GM10248 (cell line): ENCODE measurements at regions of chr14 and their contacts with region 1.

Region 1: GRCh38 chr14:75293920-75294642 is 15.5 kb downstream of the FOS start:
- DNase-seq: peak; percentile 99
- CTCF ChIP-seq: no peak

Region 2: DNA sequence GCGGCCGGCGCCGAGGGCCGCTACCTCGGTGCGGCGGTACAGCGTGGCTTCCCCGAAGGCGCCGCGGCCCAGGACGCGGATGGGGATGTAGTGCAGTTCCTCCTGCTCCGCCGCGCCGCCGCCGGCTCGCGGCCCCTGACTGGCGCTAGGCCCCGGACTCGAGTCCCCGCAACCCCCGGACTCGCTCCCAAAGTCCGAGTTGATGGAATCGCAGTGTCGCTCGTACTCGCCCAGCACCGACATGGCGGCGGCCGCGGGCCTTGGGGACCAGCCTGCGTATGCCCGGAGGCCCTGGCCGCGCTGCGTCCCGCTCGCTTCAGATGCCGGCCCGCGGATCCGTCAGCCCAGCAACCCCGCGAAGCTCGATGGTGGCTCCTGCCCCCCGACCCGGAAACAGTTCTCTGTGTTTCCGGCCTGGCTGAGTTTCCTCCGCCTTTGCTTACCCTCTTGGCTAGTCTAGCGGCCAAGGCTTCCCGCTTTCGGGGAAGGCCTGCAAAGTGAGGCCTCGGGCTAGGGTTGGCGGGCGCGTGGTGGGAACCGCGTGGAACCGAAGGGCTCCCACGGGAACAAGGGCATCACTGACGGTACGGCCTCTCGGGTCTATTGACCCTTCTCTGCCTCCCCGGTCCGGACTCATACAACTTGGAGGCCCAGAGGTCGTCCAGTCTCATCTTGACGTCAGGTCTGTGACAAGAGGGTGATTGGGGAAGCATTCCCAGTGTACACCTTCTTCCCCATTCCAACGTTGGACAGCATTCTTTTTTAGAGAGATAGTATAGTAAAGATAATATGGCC is 167.2 kb before region 1 on chr14 and contains the start of gene NEK9:
- CTCF ChIA-PET with region 1: interaction called, 102 read pairs
- POLR2A ChIA-PET with region 1: interaction called, 5 read pairs
- DNase-seq: peak; percentile 94
- CTCF ChIP-seq: no peak

Region 3: GRCh38 chr14:75141967-75142366 is 152.1 kb before region 1 on chr14:
- CTCF ChIA-PET with region 1: interaction called, 111 read pairs
- POLR2A ChIA-PET with region 1: no interaction called
- DNase-seq: no peak
- CTCF ChIP-seq: peak; percentile 36

Region 4: DNA sequence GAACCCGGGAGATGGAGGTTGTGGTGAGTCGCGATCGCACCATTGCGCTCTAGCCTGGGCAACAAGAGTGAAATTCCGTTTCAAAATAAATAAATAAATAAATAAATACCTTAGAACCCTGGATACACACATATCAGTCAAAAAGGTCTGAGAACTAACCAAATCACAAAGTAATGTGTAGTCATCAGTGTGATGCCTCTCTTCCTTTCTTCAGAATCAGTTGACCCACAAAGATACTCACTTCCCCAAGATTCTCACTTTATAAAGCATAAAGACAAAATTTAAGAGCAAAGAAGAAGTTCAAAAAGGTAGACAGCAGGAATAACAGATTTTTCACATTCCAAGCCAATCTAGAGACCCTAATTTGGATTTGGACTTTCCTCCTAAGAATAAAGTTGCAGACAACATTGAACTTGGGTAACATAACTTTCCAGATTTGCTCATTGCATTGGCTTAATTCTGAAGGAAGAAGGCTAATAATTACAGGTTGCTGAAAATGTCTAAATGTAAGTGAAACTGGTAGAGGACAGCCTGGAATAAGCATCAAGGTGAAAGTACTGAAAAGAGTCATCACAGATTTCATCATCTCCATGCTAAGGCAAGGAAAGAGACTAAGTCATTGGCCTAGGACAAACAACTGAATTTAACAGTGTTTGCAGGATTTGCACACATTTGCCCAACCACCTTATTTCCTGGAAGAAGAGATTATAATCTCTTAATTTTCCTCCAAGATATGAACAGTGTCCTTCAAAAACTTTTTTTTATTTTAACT is 135.1 kb before region 1 on chr14:
- CTCF ChIA-PET with region 1: interaction called, 12 read pairs
- POLR2A ChIA-PET with region 1: no interaction called
- DNase-seq: no peak
- CTCF ChIP-seq: no peak

Region 5: GRCh38 chr14:75283162-75283881 is 10.8 kb before region 1 on chr14:
- CTCF ChIA-PET with region 1: interaction called, 42 read pairs
- POLR2A ChIA-PET with region 1: interaction called, 11 read pairs
- DNase-seq: no peak
- CTCF ChIP-seq: no peak

Region 6: DNA sequence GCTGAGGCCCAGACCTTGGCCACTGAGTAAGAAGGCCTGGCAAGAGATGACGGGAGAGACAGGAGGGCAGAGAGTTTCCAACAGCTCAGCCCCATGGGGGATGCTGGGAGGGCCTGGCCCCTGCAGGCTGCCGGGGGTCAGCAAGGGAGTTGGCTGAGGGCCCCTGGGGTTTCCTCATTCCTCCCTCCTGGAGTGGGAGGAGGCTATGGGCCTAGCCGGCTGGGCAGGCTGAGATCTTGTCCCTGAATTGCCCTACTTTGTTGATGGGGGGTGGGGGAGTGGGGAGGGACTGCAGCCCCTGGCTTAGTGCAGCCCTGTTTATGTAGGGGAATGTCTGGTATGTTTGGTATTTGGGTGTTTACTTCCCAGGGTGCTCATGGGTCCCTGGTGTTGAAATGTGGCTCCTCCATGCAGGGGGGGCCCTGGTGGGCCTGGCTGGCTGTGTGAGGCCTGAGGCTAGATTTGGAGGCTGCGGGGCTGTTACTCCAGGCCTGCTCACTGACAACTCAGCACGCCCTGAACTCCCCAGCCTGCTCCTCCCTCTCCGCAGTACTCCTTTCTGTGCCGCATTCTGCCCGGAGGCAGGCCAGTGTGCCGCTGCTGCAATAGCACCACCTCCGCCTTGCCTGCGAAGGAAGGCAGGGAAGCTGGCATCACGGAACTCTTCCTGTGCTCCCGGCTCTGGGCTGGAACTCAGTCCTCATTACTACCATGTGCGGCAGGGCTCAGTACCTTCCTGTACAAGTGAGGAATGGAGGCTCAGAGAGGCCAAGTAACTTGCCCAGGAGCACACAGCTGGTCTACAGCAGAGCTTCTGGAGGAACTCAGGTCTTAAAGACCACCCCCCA is 159.0 kb after region 1 on chr14:
- CTCF ChIA-PET with region 1: interaction called, 17 read pairs
- POLR2A ChIA-PET with region 1: no interaction called
- DNase-seq: no peak
- CTCF ChIP-seq: no peak